Activated T-helper 1 cell treated with anti-CD3 and anti-CD28 coated beads, Interleukin-12 subunit alpha, Interleukin-12 subunit beta, Interleukin-2, Interleukin-4 antibody, amounts not matched to agents 30 ng/mL and 10 ng/mL and 1 ng/mL, durations not matched to agents 14 hours and 24 hours and 36 hours (primary cell): ENCODE measurements at regions of chr1 and their contacts with region 1.

Region 1: GRCh38 chr1:196723322-196724185 is 51.1 kb upstream of the CFHR3 start:
- DNase-seq: peak; percentile 27
- H3K4me3 Mint-ChIP-seq: no peak overlapping the region
- H3K27ac Mint-ChIP-seq: no peak overlapping the region
- H3K4me1 Mint-ChIP-seq: no peaks in the 10 kb centered on the region
- H3K27me3 Mint-ChIP-seq: no peaks in the 10 kb centered on the region

Region 2: DNA sequence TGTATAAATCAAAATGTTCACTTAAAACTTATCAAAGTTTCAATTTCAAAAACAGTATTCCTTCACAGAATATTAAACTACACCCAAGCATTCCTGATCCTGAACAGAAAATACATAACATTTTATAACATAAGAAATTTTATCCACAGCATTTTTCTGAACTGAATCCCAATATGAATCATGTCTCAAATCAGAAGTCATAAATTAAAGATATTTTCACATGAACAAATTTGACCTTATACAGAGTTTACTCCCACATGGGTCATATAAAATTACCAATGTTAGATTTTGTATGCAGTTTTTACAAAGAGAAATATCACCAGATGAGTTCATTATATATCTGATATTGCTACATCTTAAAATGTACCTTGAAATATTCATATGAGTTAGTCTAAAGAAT is 471.5 kb after region 1 on chr1:
- intact Hi-C with region 1: loop called (anchors 10 kb)
- DNase-seq: no peak
- H3K4me3 Mint-ChIP-seq: no peak overlapping the region
- H3K27ac Mint-ChIP-seq: no peak overlapping the region
- H3K4me1 Mint-ChIP-seq: peaks cover 53% of the 10 kb centered on the region
- H3K27me3 Mint-ChIP-seq: no peaks in the 10 kb centered on the region

Region 3: GRCh38 chr1:197356723-197357533 is 633.4 kb after region 1 on chr1:
- intact Hi-C with region 1: loop called (anchors 1 kb)
- DNase-seq: no peak
- H3K4me3 Mint-ChIP-seq: no peak overlapping the region
- H3K27ac Mint-ChIP-seq: no peak overlapping the region
- H3K4me1 Mint-ChIP-seq: no peaks in the 10 kb centered on the region
- H3K27me3 Mint-ChIP-seq: no peaks in the 10 kb centered on the region